B cell (primary cell): ENCODE measurements at regions of chr14 and their contacts with region 1.

Region 1: DNA sequence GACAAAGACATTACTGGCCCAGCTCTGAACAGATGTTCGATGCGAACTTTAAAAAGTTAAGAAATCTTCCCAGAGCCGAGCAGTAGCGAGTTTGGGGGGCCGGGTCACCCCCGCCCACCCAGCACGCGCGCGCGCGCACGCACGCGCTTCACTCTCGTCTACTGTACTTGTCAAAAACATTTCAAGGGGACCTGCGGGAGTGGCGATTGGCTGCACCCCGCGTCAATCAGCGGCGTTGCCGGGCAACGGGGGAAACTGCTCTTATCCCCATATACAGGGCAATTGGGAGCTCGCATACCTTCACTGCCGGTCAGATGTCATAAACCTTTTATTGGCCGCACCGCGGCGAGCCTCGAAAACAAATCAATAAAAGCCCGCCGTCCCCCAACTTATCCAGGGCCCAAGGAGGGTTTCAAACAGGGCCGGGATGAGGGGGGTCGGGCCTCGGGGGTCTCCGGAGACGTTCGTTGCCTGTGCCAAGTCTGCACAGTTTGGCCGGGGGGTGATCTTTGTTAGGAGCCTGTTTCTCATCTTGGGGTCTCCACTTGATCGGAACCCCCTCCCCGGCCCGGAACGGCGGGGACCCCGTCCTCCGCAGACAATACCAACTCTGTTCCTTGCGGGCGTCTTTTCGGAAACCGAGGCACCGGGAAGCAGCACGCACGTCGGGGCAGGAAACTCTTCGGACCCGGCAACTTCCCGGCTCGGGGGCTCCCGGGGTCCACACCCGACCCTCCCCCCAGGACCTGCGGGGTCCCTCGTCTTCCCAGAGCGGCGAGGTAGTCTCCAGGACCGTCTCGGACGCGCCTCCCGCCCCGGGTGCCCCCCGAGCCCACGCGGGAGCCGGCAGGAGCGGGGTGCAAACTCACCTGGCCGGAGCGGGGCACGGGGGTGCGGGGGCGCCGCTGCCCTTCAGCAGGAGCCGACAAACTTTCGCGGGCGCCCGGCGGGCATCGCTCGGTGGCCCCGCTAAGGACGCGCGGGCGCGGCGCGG is 734 bp downstream of the FOXN3 start:
- DNase-seq: peak; percentile 99
- ATAC-seq: peak; percentile 68
- H3K4me3 ChIP-seq: peak overlapping the region; percentile 75 to 94 (median 83)
- H3K4me3 Mint-ChIP-seq: peak overlapping the region; percentile 92
- H3K27ac ChIP-seq: peak overlapping the region; percentile 91 to 94
- H3K27ac Mint-ChIP-seq: peak overlapping the region; percentile 95
- H3K4me1 ChIP-seq: peaks cover 15 to 18% of the 10 kb centered on the region in 2 donors
- H3K4me1 Mint-ChIP-seq: peaks cover 41% of the 10 kb centered on the region
- H3K27me3 ChIP-seq: no peaks in the 10 kb centered on the region
- H3K27me3 Mint-ChIP-seq: no peaks in the 10 kb centered on the region
- CTCF ChIP-seq: no peak

Region 2: DNA sequence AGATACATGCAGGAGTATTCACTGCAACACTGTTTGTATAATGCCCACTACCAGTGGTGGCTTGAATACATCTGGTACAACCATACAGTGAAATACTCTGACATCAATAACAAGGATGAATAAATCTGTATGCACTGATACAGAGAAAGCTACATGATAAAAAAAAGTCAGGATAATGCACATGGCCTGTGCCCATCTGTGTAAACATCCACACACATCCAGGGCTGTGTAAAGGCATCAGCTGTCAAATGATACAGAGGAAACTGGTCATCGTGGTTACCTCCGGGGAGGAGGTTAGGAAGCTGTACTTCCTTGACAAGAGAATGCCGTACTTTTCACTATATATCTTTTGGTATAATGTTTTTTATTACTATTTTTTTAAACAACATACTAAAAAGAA is 175.9 kb before region 1 on chr14:
- CTCF ChIA-PET with region 1: no interaction called
- POLR2A ChIA-PET with region 1: no interaction called
- intact Hi-C with region 1: loop called (anchors 1 kb)
- DNase-seq: no peak
- ATAC-seq: no peak
- H3K4me3 ChIP-seq: no peak overlapping the region
- H3K4me3 Mint-ChIP-seq: no peak overlapping the region
- H3K27ac ChIP-seq: no peak overlapping the region
- H3K27ac Mint-ChIP-seq: no peak overlapping the region
- H3K4me1 ChIP-seq: peaks cover 31 to 37% of the 10 kb centered on the region in 2 donors
- H3K4me1 Mint-ChIP-seq: peaks cover 59% of the 10 kb centered on the region
- H3K27me3 ChIP-seq: no peaks in the 10 kb centered on the region
- H3K27me3 Mint-ChIP-seq: no peaks in the 10 kb centered on the region
- CTCF ChIP-seq: no peak

Region 3: GRCh38 chr14:89365061-89365801 is 51.1 kb before region 1 on chr14:
- CTCF ChIA-PET with region 1: interaction called, 3 read pairs
- POLR2A ChIA-PET with region 1: interaction called, 12 read pairs
- intact Hi-C with region 1: loop called (anchors 1 kb)
- DNase-seq: peak; percentile 87
- ATAC-seq: peak; percentile 93
- H3K4me3 ChIP-seq: peak overlapping the region; percentile 29 to 60 (median 51)
- H3K4me3 Mint-ChIP-seq: peak overlapping the region; percentile 84
- H3K27ac ChIP-seq: peak overlapping the region; percentile 86 to 92
- H3K27ac Mint-ChIP-seq: peak overlapping the region; percentile 90
- H3K4me1 ChIP-seq: peaks cover 43 to 52% of the 10 kb centered on the region in 2 donors
- H3K4me1 Mint-ChIP-seq: peaks cover 57% of the 10 kb centered on the region
- H3K27me3 ChIP-seq: no peaks in the 10 kb centered on the region
- H3K27me3 Mint-ChIP-seq: no peaks in the 10 kb centered on the region
- CTCF ChIP-seq: no peak

Region 4: GRCh38 chr14:89461256-89461655 is 45.0 kb after region 1 on chr14:
- CTCF ChIA-PET with region 1: no interaction called
- POLR2A ChIA-PET with region 1: no interaction called
- intact Hi-C with region 1: loop called (anchors 5 kb)
- DNase-seq: no peak
- ATAC-seq: no peak
- H3K4me3 ChIP-seq: no peak overlapping the region
- H3K4me3 Mint-ChIP-seq: no peak overlapping the region
- H3K27ac ChIP-seq: no peak overlapping the region
- H3K27ac Mint-ChIP-seq: no peak overlapping the region
- H3K4me1 ChIP-seq: peaks cover 32 to 46% of the 10 kb centered on the region in 2 donors
- H3K4me1 Mint-ChIP-seq: peaks cover 59% of the 10 kb centered on the region
- H3K27me3 ChIP-seq: no peaks in the 10 kb centered on the region
- H3K27me3 Mint-ChIP-seq: no peaks in the 10 kb centered on the region
- CTCF ChIP-seq: no peak

Region 5: GRCh38 chr14:89479802-89480201 is 63.5 kb after region 1 on chr14:
- CTCF ChIA-PET with region 1: no interaction called
- POLR2A ChIA-PET with region 1: no interaction called
- intact Hi-C with region 1: no loop called
- DNase-seq: no peak
- ATAC-seq: no peak
- H3K4me3 ChIP-seq: no peak overlapping the region
- H3K4me3 Mint-ChIP-seq: no peak overlapping the region
- H3K27ac ChIP-seq: no peak overlapping the region
- H3K27ac Mint-ChIP-seq: no peak overlapping the region
- H3K4me1 ChIP-seq: no peaks in the 10 kb centered on the region
- H3K4me1 Mint-ChIP-seq: peaks cover 5% of the 10 kb centered on the region
- H3K27me3 ChIP-seq: no peaks in the 10 kb centered on the region
- H3K27me3 Mint-ChIP-seq: no peaks in the 10 kb centered on the region
- CTCF ChIP-seq: no peak

Region 6: DNA sequence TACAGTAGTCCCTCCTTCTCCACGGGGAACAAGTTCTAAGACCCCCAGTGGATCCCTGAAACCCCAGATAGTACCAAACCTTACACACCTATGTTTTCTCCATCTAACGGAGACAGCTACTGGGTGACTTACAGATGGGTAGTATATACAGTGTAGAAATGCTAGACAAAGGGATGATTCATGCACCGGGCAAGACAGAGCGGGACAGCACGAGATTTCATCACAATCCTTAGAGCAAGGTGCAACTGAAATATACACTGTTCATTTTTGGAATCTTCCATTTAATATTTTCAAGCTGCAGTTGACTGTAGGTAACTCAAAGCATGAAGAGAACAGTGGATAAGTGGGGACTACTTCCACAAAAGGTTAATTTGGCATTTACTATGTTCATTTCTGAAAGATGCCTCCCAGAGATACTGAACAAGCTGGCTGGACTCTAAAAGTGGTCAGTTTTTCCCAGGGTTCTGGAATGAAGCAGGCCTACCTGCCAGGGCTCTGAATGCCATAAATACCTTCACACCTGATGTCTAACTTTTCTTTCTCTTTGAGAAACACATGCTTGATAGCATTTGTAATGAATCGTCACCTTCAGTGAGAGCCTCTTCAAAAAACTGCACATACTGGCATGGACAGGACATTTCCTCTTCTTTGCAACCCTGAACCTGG is 128.5 kb after region 1 on chr14:
- CTCF ChIA-PET with region 1: no interaction called
- POLR2A ChIA-PET with region 1: no interaction called
- intact Hi-C with region 1: no loop called
- DNase-seq: no peak
- ATAC-seq: no peak
- H3K4me3 ChIP-seq: no peak overlapping the region
- H3K4me3 Mint-ChIP-seq: no peak overlapping the region
- H3K27ac ChIP-seq: no peak overlapping the region
- H3K27ac Mint-ChIP-seq: no peak overlapping the region
- H3K4me1 ChIP-seq: peaks cover 0 to 3% of the 10 kb centered on the region in 2 donors
- H3K4me1 Mint-ChIP-seq: peaks cover 18% of the 10 kb centered on the region
- H3K27me3 ChIP-seq: no peaks in the 10 kb centered on the region
- H3K27me3 Mint-ChIP-seq: no peaks in the 10 kb centered on the region
- CTCF ChIP-seq: no peak

Region 7: GRCh38 chr14:89720741-89721315 is 304.5 kb after region 1 on chr14:
- CTCF ChIA-PET with region 1: no interaction called
- POLR2A ChIA-PET with region 1: interaction called, 4 read pairs
- intact Hi-C with region 1: loop called (anchors 2 kb)
- DNase-seq: peak; percentile 91
- ATAC-seq: peak; percentile 93
- H3K4me3 ChIP-seq: peak overlapping the region in 2 of 5 experiments; percentile 26 to 40
- H3K4me3 Mint-ChIP-seq: peak overlapping the region; percentile 75
- H3K27ac ChIP-seq: peak overlapping the region; percentile 93 to 95
- H3K27ac Mint-ChIP-seq: peak overlapping the region; percentile 95
- H3K4me1 ChIP-seq: peaks cover 59 to 62% of the 10 kb centered on the region in 2 donors
- H3K4me1 Mint-ChIP-seq: peaks cover 62% of the 10 kb centered on the region
- H3K27me3 ChIP-seq: no peaks in the 10 kb centered on the region
- H3K27me3 Mint-ChIP-seq: no peaks in the 10 kb centered on the region
- CTCF ChIP-seq: no peak